GM12878 (cell line): ENCODE measurements at regions of chr4 and their contacts with region 1.

Region 1: GRCh38 chr4:184474263-184475095 is at the start of gene IRF2:
- DNase-seq: peak; percentile 93
- ATAC-seq: peak; percentile 75
- H3K4me3 ChIP-seq: peak within 1 kb of the TSS; percentile 99
- H3K27ac ChIP-seq: peak within 1 kb of the TSS; percentile 92
- H3K4me1 ChIP-seq: peaks cover 14% of the 10 kb centered on the region
- H3K27me3 ChIP-seq: no peaks in the 10 kb centered on the region
- CTCF ChIP-seq: no peak
- EP300 ChIP-seq: peak; percentile 51; a peak in 3 of 4 replicates
- POLR2A ChIP-seq: peak; percentile 87
- RAD21 ChIP-seq: peak; percentile 47; the same call in 1 of the 2 replicates
- polyA plus RNA-seq, gene IRF2: 58.4 to 59.9 TPM

Region 2: GRCh38 chr4:184343502-184344177 is 130.8 kb before region 1 on chr4:
- CTCF ChIA-PET with region 1: no interaction called
- POLR2A ChIA-PET with region 1: interaction called, 3 read pairs
- RAD21 ChIA-PET with region 1: interaction called, 11 read pairs
- SMC1A ChIA-PET with region 1: interaction called, 7 read pairs
- in situ Hi-C with region 1: loop called (anchors 5 kb)
- intact Hi-C with region 1: no loop called
- DNase-seq: peak; percentile 69
- ATAC-seq: peak; percentile 51
- H3K4me3 ChIP-seq: peak overlapping the region; percentile 55
- H3K27ac ChIP-seq: peak overlapping the region; percentile 86
- H3K4me1 ChIP-seq: peaks cover 52% of the 10 kb centered on the region
- H3K27me3 ChIP-seq: no peaks in the 10 kb centered on the region
- CTCF ChIP-seq: no peak
- EP300 ChIP-seq: peak in 1 of 2 experiments; percentile 14; a peak in 1 of 4 replicates
- POLR2A ChIP-seq: peak; percentile 72
- RAD21 ChIP-seq: no peak

Region 3: DNA sequence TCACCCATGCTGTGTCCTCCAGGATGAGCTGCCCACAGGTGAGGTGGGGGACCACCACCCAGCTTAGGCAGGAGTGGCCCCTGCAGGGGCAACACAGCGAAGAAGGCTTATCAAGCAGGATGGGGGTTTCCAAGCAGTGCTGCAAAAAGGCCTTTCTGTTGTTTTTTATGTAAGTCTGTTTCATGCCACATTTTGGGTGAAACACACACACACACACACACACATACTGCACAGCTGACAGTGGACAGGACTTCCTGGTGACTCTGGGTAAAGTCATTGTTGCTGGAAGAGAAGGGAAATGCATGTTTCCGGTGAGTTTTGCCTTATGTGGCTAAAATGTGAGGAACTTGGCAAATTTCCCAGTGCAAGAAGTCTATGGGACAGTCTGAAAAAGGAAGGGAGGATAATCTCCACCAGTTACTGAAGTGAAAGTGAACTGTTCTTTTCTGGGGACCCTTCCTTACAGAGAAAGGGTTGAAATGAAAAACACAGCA is 119.3 kb before region 1 on chr4:
- CTCF ChIA-PET with region 1: interaction called, 11 read pairs
- POLR2A ChIA-PET with region 1: interaction called, 12 read pairs
- RAD21 ChIA-PET with region 1: interaction called, 6 read pairs
- SMC1A ChIA-PET with region 1: interaction called, 14 read pairs
- in situ Hi-C with region 1: no loop called
- intact Hi-C with region 1: loop called (anchors 1 kb)
- DNase-seq: peak; percentile 84
- ATAC-seq: peak; percentile 15
- H3K4me3 ChIP-seq: no peak overlapping the region
- H3K27ac ChIP-seq: peak overlapping the region; percentile 99
- H3K4me1 ChIP-seq: peaks cover 16% of the 10 kb centered on the region
- H3K27me3 ChIP-seq: no peaks in the 10 kb centered on the region
- CTCF ChIP-seq: no peak
- EP300 ChIP-seq: peak; percentile 52 to 63; a peak in 2 of 4 replicates
- POLR2A ChIP-seq: no peak
- RAD21 ChIP-seq: peak; percentile 28

Region 4: GRCh38 chr4:184395971-184396391 is 78.5 kb before region 1 on chr4:
- CTCF ChIA-PET with region 1: no interaction called
- POLR2A ChIA-PET with region 1: no interaction called
- RAD21 ChIA-PET with region 1: no interaction called
- SMC1A ChIA-PET with region 1: interaction called, 4 read pairs
- in situ Hi-C with region 1: no loop called
- intact Hi-C with region 1: loop called (anchors 5 kb)
- DNase-seq: peak; percentile 81
- ATAC-seq: peak; percentile 89
- H3K4me3 ChIP-seq: peak overlapping the region; percentile 29
- H3K27ac ChIP-seq: peak overlapping the region; percentile 76
- H3K4me1 ChIP-seq: peaks cover 29% of the 10 kb centered on the region
- H3K27me3 ChIP-seq: no peaks in the 10 kb centered on the region
- CTCF ChIP-seq: no peak
- EP300 ChIP-seq: no peak
- POLR2A ChIP-seq: peak; percentile 63; the same call in 1 of the 2 replicates
- RAD21 ChIP-seq: no peak

Region 5: GRCh38 chr4:184459413-184459812 is 15.1 kb before region 1 on chr4:
- CTCF ChIA-PET with region 1: no interaction called
- POLR2A ChIA-PET with region 1: interaction called, 4 read pairs
- RAD21 ChIA-PET with region 1: interaction called, 3 read pairs
- SMC1A ChIA-PET with region 1: interaction called, 11 read pairs
- in situ Hi-C with region 1: no loop called
- intact Hi-C with region 1: no loop called
- DNase-seq: no peak
- ATAC-seq: peak; percentile 52
- H3K4me3 ChIP-seq: no peak overlapping the region
- H3K27ac ChIP-seq: no peak overlapping the region
- H3K4me1 ChIP-seq: peaks cover 36% of the 10 kb centered on the region
- H3K27me3 ChIP-seq: no peaks in the 10 kb centered on the region
- CTCF ChIP-seq: no peak
- EP300 ChIP-seq: no peak
- POLR2A ChIP-seq: no peak
- RAD21 ChIP-seq: no peak

Region 6: GRCh38 chr4:184514121-184514988 is 39.9 kb after region 1 on chr4:
- CTCF ChIA-PET with region 1: interaction called, 3 read pairs
- POLR2A ChIA-PET with region 1: interaction called, 8 read pairs
- RAD21 ChIA-PET with region 1: interaction called, 16 read pairs
- SMC1A ChIA-PET with region 1: interaction called, 22 read pairs
- in situ Hi-C with region 1: no loop called
- intact Hi-C with region 1: loop called (anchors 1 kb)
- DNase-seq: peak; percentile 94
- ATAC-seq: peak; percentile 96
- H3K4me3 ChIP-seq: peak overlapping the region; percentile 42
- H3K27ac ChIP-seq: peak overlapping the region; percentile 70
- H3K4me1 ChIP-seq: peaks cover 32% of the 10 kb centered on the region
- H3K27me3 ChIP-seq: no peaks in the 10 kb centered on the region
- CTCF ChIP-seq: no peak
- EP300 ChIP-seq: peak; percentile 99 to 100
- POLR2A ChIP-seq: 0 out of 2 replicates have a peak, but pooled peaks have one; percentile 30
- RAD21 ChIP-seq: no peak

Region 7: DNA sequence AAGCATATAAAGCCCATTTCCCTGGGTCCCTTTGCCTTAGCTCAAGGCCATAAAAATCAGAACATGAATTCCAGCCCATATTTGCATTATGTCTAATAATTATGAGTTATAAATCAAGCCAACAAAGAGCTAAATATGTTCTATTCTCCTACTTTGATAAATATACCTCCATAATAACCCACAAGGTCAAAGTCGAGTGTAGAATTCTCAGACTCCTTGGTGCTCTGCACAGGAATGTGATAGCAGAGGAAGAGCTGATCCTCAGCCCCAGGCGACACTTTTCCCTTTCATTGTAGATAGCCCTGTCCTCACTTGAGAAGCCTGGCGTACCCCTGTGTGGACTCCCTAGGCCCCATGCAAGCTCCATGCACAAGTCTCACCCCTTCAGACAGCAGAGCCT is 89.1 kb after region 1 on chr4:
- CTCF ChIA-PET with region 1: no interaction called
- POLR2A ChIA-PET with region 1: no interaction called
- RAD21 ChIA-PET with region 1: no interaction called
- SMC1A ChIA-PET with region 1: no interaction called
- in situ Hi-C with region 1: no loop called
- intact Hi-C with region 1: no loop called
- DNase-seq: no peak
- ATAC-seq: no peak
- H3K4me3 ChIP-seq: no peak overlapping the region
- H3K27ac ChIP-seq: no peak overlapping the region
- H3K4me1 ChIP-seq: no peaks in the 10 kb centered on the region
- H3K27me3 ChIP-seq: no peaks in the 10 kb centered on the region
- CTCF ChIP-seq: no peak
- EP300 ChIP-seq: no peak
- POLR2A ChIP-seq: no peak
- RAD21 ChIP-seq: no peak

Region 8: DNA sequence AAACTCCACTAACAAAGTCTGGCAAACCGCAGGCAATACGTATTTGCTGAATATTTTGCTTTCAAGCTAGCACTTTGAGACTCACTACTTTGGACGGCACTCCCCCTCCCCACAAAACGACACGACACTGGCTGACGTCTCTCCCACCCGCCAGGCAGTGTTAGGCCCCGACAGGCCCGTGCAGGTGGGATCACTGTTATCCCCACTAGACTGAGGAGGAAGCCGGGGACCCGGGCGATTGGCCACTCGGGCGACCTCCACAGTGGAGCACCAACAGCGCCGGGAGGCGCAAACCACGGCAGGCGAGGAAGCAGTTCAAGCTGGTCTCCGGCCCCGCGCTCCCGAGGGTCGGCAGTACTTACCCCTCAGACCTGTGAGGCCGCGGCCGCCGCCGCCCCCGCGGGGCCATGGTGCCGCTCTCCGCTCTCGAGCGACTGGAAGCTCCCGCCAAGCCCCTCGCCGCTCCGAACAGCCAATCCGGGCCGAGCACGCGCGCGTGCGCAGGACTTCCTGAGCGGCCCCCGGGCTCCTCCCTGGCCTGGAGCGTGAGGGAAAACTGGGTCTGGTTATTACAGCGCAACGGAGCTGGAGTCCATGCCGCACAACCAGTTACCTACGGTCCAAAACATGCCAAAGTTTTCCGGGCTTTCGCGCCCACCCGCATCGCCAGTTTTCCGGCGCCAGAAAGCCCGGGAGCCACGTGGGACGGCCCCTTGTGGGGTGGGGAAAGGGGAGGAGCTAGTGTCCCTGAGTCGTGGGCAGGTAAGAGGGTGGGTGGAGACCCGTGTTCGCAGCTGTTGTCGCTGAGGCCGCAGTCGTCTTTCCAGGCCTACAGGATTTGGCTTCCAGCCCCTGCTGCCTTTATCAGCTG is 259.4 kb after region 1 on chr4 and contains the start of gene CENPU:
- CTCF ChIA-PET with region 1: no interaction called
- POLR2A ChIA-PET with region 1: no interaction called
- RAD21 ChIA-PET with region 1: interaction called, 4 read pairs
- SMC1A ChIA-PET with region 1: no interaction called
- in situ Hi-C with region 1: no loop called
- intact Hi-C with region 1: loop called (anchors 5 kb)
- DNase-seq: peak; percentile 94
- ATAC-seq: peak; percentile 93
- H3K4me3 ChIP-seq: peak within 1 kb of the TSS; percentile 91
- H3K27ac ChIP-seq: peak within 1 kb of the TSS; percentile 81
- H3K4me1 ChIP-seq: peaks cover 9% of the 10 kb centered on the region
- H3K27me3 ChIP-seq: no peaks in the 10 kb centered on the region
- CTCF ChIP-seq: no peak
- EP300 ChIP-seq: no peak
- POLR2A ChIP-seq: peak; percentile 91
- RAD21 ChIP-seq: 0 out of 2 replicates have a peak, but pooled peaks have one; percentile 22
- polyA plus RNA-seq, gene CENPU: 26.6 to 46.5 TPM